Activated CD4-positive, alpha-beta T cell treated with anti-CD3 and anti-CD28 coated beads, Interleukin-2, amount 10 ng/mL, durations not matched to agents 24 days and 14 days (primary cell): ENCODE measurements at regions of chr2 and their contacts with region 1.

Region 1: DNA sequence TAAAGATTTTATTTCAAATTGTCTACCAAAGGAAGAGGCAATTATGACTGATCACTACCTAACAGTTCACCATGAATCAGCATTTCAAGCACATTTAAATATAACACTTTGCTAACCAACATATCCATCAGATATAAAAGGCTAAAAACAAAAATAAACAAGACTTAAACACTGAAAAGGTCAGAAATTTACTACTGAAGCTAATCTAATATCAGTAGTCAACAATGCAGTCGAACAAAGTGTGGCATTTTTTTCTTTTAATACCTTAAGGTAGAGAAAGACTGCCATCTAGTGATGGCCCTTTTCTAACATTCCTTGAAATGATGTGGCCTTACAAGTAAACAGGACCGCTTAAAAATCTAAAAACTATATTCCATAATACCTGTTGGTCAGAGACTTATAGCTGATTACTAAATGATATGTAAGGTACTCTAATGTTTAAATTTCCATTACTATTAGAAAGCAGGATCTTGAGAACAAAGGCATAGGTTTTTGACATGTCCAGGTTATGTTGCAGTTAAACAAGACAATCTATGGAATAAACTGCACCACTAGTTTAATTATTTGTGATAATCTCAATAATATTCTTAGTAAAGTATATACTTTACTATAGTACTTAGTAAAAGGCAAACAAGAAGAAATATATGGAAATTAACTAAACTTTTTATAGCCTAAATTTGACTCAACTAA is 80.0 kb downstream of the EXOC6B start:
- DNase-seq: peak; percentile 58
- H3K4me3 Mint-ChIP-seq: no peak overlapping the region
- H3K27ac Mint-ChIP-seq: no peak overlapping the region
- H3K4me1 Mint-ChIP-seq: no peaks in the 10 kb centered on the region
- H3K27me3 Mint-ChIP-seq: no peaks in the 10 kb centered on the region

Region 2: DNA sequence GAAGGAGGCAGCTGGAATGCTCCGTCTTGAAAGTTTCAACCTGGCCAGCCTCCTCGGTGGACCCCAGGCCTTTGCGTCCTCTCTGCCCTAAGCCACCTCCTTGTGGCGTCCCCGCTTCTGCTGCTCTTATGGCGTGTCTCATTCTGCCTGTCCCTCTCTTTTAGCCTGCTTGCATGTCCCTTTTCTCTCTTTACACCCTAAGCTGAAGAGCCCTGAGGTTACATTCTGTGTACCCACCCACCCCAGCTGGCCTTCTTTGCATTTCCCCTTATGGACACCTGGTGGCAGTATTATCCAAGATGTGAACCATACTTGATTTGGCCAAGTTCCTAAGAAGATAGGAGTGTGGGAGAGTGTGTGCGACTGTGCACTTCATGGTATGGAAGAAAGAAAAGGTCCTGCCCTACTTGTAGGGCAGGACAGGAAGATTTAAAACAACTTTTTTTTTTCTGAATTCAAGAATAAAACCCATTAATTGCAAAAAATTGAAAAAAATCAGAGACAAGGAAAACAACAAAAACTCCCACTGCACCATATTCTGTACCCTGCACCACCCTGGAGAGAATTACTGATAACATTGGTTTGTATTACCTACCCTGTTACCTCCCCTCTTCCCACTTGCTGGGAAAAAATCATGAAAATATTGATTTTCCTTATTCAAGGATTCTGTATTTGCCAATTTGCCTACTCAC is 1215.0 kb before region 1 on chr2:
- intact Hi-C with region 1: loop called (anchors 5 kb)
- DNase-seq: peak; percentile 71
- H3K4me3 Mint-ChIP-seq: no peak overlapping the region
- H3K27ac Mint-ChIP-seq: no peak overlapping the region
- H3K4me1 Mint-ChIP-seq: peaks cover 7% of the 10 kb centered on the region
- H3K27me3 Mint-ChIP-seq: peaks cover 13% of the 10 kb centered on the region

Region 3: DNA sequence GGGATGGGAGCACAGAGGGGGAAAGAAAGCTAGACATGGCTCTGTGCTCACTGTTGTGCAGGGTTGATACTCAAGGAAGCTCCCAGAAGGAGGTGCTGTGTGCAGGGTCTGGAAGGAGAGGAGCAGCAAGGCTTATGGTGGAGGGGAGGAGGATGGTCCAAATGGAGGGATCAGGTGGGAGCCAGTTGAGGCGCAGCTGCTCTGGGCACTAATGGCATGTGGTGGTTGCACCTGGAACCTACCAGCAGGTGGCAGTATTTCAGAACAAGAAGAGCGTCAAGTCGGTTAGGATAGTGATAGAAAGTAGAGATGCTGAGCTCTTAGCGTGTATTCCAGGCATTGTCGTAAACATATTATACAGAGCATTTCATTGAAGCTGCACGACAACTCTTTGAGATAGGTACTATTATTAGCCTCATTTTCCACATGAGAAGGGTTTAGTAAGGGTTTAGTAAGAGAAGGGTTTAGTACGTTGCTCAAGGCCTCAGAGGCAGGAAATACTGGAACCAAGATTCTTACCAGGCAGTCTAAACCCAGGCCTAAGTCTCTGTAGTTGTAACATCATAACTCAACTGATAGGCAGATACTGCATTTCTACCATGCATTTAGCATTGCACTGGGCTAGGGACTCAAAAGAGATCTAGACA is 821.8 kb before region 1 on chr2:
- intact Hi-C with region 1: loop called (anchors 2 kb)
- DNase-seq: peak; percentile 84
- H3K4me3 Mint-ChIP-seq: no peak overlapping the region
- H3K27ac Mint-ChIP-seq: no peak overlapping the region
- H3K4me1 Mint-ChIP-seq: no peaks in the 10 kb centered on the region
- H3K27me3 Mint-ChIP-seq: no peaks in the 10 kb centered on the region

Region 4: DNA sequence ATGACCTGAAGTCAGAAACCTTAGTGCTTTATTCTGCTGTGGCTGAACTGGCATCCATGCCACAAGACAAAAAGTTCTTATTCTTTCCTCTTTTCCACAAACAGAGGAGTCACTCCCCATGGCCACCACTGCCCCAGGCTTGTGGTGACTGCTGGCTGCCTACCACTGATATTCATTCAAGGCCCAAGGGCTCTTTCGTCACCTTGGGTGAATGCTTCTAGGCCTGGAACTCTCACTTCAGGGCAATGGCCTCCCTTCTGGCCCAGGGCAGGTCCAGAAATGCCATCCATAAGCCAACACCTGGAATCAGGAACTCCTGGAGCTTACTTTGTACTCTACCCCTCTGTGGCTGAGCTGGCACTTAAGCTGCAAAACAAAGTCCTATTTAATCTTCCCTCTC is 786.6 kb after region 1 on chr2:
- intact Hi-C with region 1: no loop called
- DNase-seq: no peak
- H3K4me3 Mint-ChIP-seq: no peak overlapping the region
- H3K27ac Mint-ChIP-seq: no peak overlapping the region
- H3K4me1 Mint-ChIP-seq: no peaks in the 10 kb centered on the region
- H3K27me3 Mint-ChIP-seq: no peaks in the 10 kb centered on the region